ENCODE measurements at regions of chr14 and their contacts with region 1.

Region 1: GRCh38 chr14:41285186-41285748 is 321.4 kb upstream of the LRFN5 start:
- DNase-seq: peak; percentile 40
- ATAC-seq: no peak
- H3K4me3 ChIP-seq: no peak overlapping the region
- H3K27ac ChIP-seq: no peak overlapping the region
- H3K4me1 ChIP-seq: no peaks in the 10 kb centered on the region
- H3K27me3 ChIP-seq: no peaks in the 10 kb centered on the region
- CTCF ChIP-seq: no peak
- EP300 ChIP-seq: no peak
- POLR2A ChIP-seq: no peak
- RAD21 ChIP-seq: no peak

Region 2: DNA sequence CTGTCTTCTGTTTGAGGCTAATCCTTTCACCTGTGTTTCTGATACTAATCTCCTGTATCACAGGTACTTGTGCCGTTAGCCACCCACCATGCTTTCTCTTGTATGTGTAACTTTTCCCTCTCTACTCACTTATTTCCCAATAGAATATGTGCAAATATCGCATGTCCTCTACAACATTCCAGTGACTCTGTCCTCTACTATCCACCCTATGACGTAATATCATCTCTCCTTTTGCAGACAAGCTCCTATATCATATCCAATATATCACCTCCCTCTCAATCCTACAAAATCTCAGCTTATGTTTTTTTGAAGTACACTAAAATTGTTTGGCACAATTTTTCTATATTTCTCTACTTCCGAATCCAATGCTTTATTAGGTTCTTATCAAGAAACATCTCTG is 88.8 kb after region 1 on chr14:
- CTCF ChIA-PET with region 1: no interaction called
- POLR2A ChIA-PET with region 1: no interaction called
- in situ Hi-C with region 1: no loop called
- intact Hi-C with region 1: no loop called
- DNase-seq: no peak
- ATAC-seq: no peak
- H3K4me3 ChIP-seq: no peak overlapping the region
- H3K27ac ChIP-seq: no peak overlapping the region
- H3K4me1 ChIP-seq: no peaks in the 10 kb centered on the region
- H3K27me3 ChIP-seq: no peaks in the 10 kb centered on the region
- CTCF ChIP-seq: no peak
- EP300 ChIP-seq: no peak
- POLR2A ChIP-seq: no peak
- RAD21 ChIP-seq: no peak

Region 3: GRCh38 chr14:41597647-41598046 is 312.4 kb after region 1 on chr14:
- CTCF ChIA-PET with region 1: interaction called, 4 read pairs
- POLR2A ChIA-PET with region 1: no interaction called
- in situ Hi-C with region 1: no loop called
- intact Hi-C with region 1: loop called (anchors 1 kb)
- DNase-seq: no peak
- ATAC-seq: no peak
- H3K4me3 ChIP-seq: no peak overlapping the region
- H3K27ac ChIP-seq: no peak overlapping the region
- H3K4me1 ChIP-seq: no peaks in the 10 kb centered on the region
- H3K27me3 ChIP-seq: no peaks in the 10 kb centered on the region
- CTCF ChIP-seq: no peak
- EP300 ChIP-seq: no peak
- POLR2A ChIP-seq: no peak
- RAD21 ChIP-seq: no peak

Region 4: DNA sequence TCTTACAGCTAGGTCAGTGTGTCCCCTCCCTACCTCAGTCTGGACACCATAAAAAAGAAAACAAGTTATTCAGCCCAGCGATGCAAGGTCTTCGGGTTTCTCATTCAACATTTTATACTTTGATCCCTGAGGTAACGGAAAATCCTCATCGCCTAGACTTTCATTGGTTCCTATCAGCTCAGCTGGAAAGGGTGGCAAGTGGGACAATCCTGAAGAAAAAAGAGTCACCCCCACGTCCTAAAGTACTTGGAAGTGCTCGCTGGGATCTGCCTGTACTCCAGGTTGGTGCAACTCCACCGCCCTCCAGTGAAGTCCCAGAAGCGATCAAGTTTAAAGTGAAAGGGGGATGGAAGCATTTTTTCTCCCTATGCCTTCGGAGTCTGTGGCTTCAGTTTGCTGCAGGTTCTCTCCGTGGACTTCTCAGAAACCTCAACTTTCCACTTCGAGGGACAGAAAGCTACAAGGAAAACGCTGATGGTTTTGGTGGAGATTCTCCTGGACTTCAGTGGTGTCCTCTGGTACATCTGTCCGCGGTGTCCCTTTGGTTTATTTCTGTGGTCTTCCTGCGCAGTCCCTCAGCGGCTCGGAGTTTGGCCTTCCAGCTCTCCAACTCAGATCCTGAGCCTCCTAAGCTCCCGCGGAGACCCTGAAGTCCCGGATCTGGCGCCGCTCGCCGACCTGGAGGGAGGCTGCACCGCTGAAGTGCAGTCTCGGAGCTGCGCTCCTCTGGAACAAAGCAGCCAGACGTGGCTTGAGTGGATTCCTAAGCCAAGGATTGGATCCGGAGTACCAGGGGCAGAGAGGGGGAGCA is 319.7 kb after region 1 on chr14:
- CTCF ChIA-PET with region 1: interaction called, 4 read pairs
- POLR2A ChIA-PET with region 1: no interaction called
- in situ Hi-C with region 1: no loop called
- intact Hi-C with region 1: loop called (anchors 1 kb)
- DNase-seq: no peak
- ATAC-seq: peak; percentile 63
- H3K4me3 ChIP-seq: peak overlapping the region in 2 of 3 experiments; percentile 8 to 18; a peak in 1 of 6 replicates
- H3K27ac ChIP-seq: no peak overlapping the region
- H3K4me1 ChIP-seq: peaks cover 17% of the 10 kb centered on the region
- H3K27me3 ChIP-seq: peaks cover 12 to 59% of the 10 kb centered on the region in 2 experiments
- CTCF ChIP-seq: no peak
- EP300 ChIP-seq: no peak
- POLR2A ChIP-seq: no peak
- RAD21 ChIP-seq: no peak

Measured in HepG2 (cell line).